ENCODE measurements at regions of chr4 and their contacts with region 1.

Region 1: DNA sequence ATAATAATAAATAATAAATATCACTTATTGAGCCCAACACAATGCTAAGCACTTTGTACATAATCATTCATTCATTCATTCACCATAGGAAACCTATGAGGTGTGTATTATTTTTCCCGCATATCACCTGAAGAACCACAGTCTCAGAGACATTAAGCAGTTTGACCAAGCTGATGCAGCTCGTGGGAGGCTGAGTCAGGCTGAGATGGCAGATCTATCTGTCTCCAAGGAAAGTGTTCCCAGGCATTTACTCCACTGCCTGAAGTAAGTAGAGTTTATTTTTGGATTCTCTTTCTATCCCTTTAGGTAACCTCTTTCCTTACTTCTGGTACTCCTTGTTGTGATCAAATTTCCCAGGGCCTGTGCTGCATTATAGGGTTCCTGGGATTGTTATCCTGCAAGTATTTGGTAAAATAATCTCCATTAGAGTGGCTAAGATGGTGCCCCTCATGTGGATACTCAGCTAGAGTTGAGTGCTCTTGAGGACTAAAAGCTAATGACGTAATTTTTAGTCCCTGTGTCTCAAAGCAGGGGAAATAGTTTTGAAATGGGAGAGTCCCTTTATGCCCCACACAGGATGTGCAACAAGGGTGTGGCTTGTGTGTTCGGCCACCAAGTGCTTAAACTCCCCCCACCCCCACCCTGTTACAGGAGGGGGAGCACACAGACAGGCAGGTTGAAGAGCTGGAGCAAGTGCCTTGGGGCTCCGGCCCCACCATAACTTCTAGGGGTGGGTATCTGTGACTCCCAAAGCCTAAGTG is 467.0 kb downstream of the STIM2 start:
- DNase-seq: no peak
- H3K4me3 ChIP-seq: no peak overlapping the region
- H3K4me1 ChIP-seq: no peaks in the 10 kb centered on the region
- H3K27me3 ChIP-seq: peaks cover 5% of the 10 kb centered on the region; the same call in 1 of the 2 replicates

Region 2: DNA sequence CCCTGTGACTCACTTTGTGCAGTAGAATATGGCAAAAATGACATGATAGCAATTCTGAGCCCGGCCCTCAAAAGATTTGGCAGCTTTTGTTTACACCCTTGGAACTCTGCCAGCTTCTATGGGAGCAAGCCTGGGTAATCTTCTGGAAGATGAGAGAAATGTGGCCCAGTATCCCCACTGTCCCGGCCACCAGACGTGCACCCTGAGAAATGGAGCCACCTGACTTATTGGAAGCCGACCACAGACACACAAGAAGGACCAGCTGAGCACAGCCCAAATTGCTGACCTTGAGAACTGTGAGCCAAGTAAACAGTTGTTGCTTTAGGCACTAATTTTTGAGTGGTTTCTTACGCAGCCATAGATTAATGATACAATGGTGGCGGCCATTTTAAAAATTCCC is 269.9 kb before region 1 on chr4:
- in situ Hi-C with region 1: loop called (anchors 10 kb)
- DNase-seq: no peak
- H3K4me3 ChIP-seq: no peak overlapping the region
- H3K4me1 ChIP-seq: peaks cover 3% of the 10 kb centered on the region
- H3K27me3 ChIP-seq: 0 out of 2 replicates have a peak, but pooled peaks cover 6% of the 10 kb centered on the region

Region 3: GRCh38 chr4:27381815-27382214 is 54.2 kb after region 1 on chr4:
- in situ Hi-C with region 1: no loop called
- DNase-seq: no peak
- H3K4me3 ChIP-seq: no peak overlapping the region
- H3K4me1 ChIP-seq: no peaks in the 10 kb centered on the region
- H3K27me3 ChIP-seq: no peaks in the 10 kb centered on the region

Measured in HAP-1 (cell line).